GM12878 (cell line): ENCODE measurements at regions of chr1 and their contacts with region 1.

Region 1: GRCh38 chr1:150162862-150163706 is 13.4 kb downstream of the PLEKHO1 start:
- DNase-seq: peak; percentile 97
- ATAC-seq: peak; percentile 66
- H3K4me3 ChIP-seq: peak overlapping the region; percentile 56
- H3K27ac ChIP-seq: peak overlapping the region; percentile 100
- H3K4me1 ChIP-seq: peaks cover 80% of the 10 kb centered on the region
- H3K27me3 ChIP-seq: no peaks in the 10 kb centered on the region
- CTCF ChIP-seq: no peak
- EP300 ChIP-seq: peak in 1 of 2 experiments; percentile 17; a peak in 1 of 4 replicates
- POLR2A ChIP-seq: peak; percentile 84
- RAD21 ChIP-seq: no peak

Region 2: GRCh38 chr1:149886396-149887195 is 276.5 kb before region 1 on chr1:
- CTCF ChIA-PET with region 1: interaction called, 13 read pairs
- POLR2A ChIA-PET with region 1: interaction called, 25 read pairs
- RAD21 ChIA-PET with region 1: interaction called, 5 read pairs
- SMC1A ChIA-PET with region 1: interaction called, 10 read pairs
- in situ Hi-C with region 1: no loop called
- intact Hi-C with region 1: loop called (anchors 1 kb)
- DNase-seq: peak; percentile 99
- ATAC-seq: peak; percentile 73
- H3K4me3 ChIP-seq: peak overlapping the region; percentile 65
- H3K27ac ChIP-seq: peak overlapping the region; percentile 93
- H3K4me1 ChIP-seq: no peaks in the 10 kb centered on the region
- H3K27me3 ChIP-seq: no peaks in the 10 kb centered on the region
- CTCF ChIP-seq: no peak
- EP300 ChIP-seq: no peak
- POLR2A ChIP-seq: peak; percentile 70
- RAD21 ChIP-seq: no peak

Region 3: DNA sequence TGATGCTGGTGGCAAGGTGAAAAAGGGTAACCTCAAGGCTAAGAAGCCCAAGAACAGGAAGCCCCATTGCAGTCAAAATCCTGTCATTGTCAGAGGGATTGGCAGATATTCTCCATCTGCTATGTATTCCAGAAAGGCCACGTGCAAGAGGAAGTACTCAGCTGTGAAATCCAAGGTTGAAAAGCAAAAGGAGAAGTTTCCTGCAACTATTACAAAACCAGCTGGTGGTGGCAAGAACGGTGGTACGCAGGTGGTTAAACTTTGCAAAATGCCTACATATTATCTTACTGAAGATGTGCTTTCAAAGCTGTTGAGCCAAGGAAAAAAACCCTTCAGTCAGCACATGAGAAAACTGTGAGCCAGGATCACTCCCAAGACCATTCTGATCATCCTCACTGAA is 109.2 kb before region 1 on chr1:
- CTCF ChIA-PET with region 1: interaction called, 16 read pairs
- POLR2A ChIA-PET with region 1: interaction called, 6 read pairs
- RAD21 ChIA-PET with region 1: interaction called, 6 read pairs
- SMC1A ChIA-PET with region 1: interaction called, 7 read pairs
- in situ Hi-C with region 1: no loop called
- intact Hi-C with region 1: no loop called
- DNase-seq: no peak
- ATAC-seq: no peak
- H3K4me3 ChIP-seq: no peak overlapping the region
- H3K27ac ChIP-seq: no peak overlapping the region
- H3K4me1 ChIP-seq: peaks cover 4% of the 10 kb centered on the region
- H3K27me3 ChIP-seq: no peaks in the 10 kb centered on the region
- CTCF ChIP-seq: no peak
- EP300 ChIP-seq: no peak
- POLR2A ChIP-seq: no peak
- RAD21 ChIP-seq: no peak

Region 4: GRCh38 chr1:150067184-150068036 is 95.7 kb before region 1 on chr1 and contains the start of gene VPS45:
- CTCF ChIA-PET with region 1: interaction called, 577 read pairs
- POLR2A ChIA-PET with region 1: interaction called, 21 read pairs
- RAD21 ChIA-PET with region 1: interaction called, 287 read pairs
- SMC1A ChIA-PET with region 1: interaction called, 338 read pairs
- in situ Hi-C with region 1: loop called (anchors 5 kb)
- intact Hi-C with region 1: loop called (anchors 2 kb)
- DNase-seq: peak; percentile 71
- ATAC-seq: peak; percentile 98
- H3K4me3 ChIP-seq: peak within 1 kb of the TSS; percentile 84
- H3K27ac ChIP-seq: peak within 1 kb of the TSS; percentile 97
- H3K4me1 ChIP-seq: peaks cover 9% of the 10 kb centered on the region; the same call in 1 of the 2 replicates
- H3K27me3 ChIP-seq: no peaks in the 10 kb centered on the region
- CTCF ChIP-seq: peak; percentile 34 to 44 (median 38); a peak in 4 of 6 replicates
- EP300 ChIP-seq: peak; percentile 13 to 36; a peak in 2 of 4 replicates
- POLR2A ChIP-seq: peak; percentile 86
- RAD21 ChIP-seq: 0 out of 2 replicates have a peak, but pooled peaks have one; percentile 18
- polyA plus RNA-seq, gene VPS45: 24.4 to 28.7 TPM

Region 5: DNA sequence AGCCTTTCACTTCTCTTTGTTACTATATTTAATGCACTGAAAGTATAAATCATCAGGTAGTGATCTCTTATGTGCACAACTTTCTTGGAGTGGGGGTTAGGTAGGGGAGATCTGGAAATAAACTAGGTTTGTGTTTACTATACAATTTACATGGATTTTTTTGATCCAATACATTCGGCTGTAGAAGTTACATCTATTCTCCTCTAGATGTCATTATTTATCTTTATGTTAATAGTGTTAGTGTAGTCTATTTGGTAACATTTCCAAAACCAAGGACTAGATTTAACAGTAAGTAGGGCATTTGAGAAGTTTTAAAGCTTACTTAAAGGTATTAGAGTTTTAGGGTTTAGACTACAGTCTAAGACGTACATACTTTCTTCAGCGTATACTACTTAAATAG is 90.1 kb before region 1 on chr1:
- CTCF ChIA-PET with region 1: interaction called, 577 read pairs
- POLR2A ChIA-PET with region 1: interaction called, 21 read pairs
- RAD21 ChIA-PET with region 1: interaction called, 287 read pairs
- SMC1A ChIA-PET with region 1: interaction called, 338 read pairs
- in situ Hi-C with region 1: loop called (anchors 5 kb)
- intact Hi-C with region 1: no loop called
- DNase-seq: no peak
- ATAC-seq: peak; percentile 85
- H3K4me3 ChIP-seq: no peak overlapping the region
- H3K27ac ChIP-seq: no peak overlapping the region
- H3K4me1 ChIP-seq: no peaks in the 10 kb centered on the region
- H3K27me3 ChIP-seq: no peaks in the 10 kb centered on the region
- CTCF ChIP-seq: peak in 2 of 3 experiments; percentile 27 to 42; a peak in 2 of 6 replicates
- EP300 ChIP-seq: no peak
- POLR2A ChIP-seq: no peak
- RAD21 ChIP-seq: peak; percentile 42; the same call in 1 of the 2 replicates

Region 6: GRCh38 chr1:150149271-150150132 is 13.6 kb before region 1 on chr1 and contains the start of gene PLEKHO1:
- CTCF ChIA-PET with region 1: interaction called, 78 read pairs
- POLR2A ChIA-PET with region 1: interaction called, 120 read pairs
- RAD21 ChIA-PET with region 1: interaction called, 65 read pairs
- SMC1A ChIA-PET with region 1: interaction called, 73 read pairs
- in situ Hi-C with region 1: no loop called
- intact Hi-C with region 1: loop called (anchors 1 kb)
- DNase-seq: no peak
- ATAC-seq: peak; percentile 68
- H3K4me3 ChIP-seq: peak within 1 kb of the TSS; percentile 100
- H3K27ac ChIP-seq: peak within 1 kb of the TSS; percentile 99
- H3K4me1 ChIP-seq: peaks cover 20% of the 10 kb centered on the region
- H3K27me3 ChIP-seq: no peaks in the 10 kb centered on the region
- CTCF ChIP-seq: no peak
- EP300 ChIP-seq: no peak
- POLR2A ChIP-seq: peak; percentile 79
- RAD21 ChIP-seq: no peak
- polyA plus RNA-seq, gene PLEKHO1: 5.3 to 12.9 TPM

Region 7: DNA sequence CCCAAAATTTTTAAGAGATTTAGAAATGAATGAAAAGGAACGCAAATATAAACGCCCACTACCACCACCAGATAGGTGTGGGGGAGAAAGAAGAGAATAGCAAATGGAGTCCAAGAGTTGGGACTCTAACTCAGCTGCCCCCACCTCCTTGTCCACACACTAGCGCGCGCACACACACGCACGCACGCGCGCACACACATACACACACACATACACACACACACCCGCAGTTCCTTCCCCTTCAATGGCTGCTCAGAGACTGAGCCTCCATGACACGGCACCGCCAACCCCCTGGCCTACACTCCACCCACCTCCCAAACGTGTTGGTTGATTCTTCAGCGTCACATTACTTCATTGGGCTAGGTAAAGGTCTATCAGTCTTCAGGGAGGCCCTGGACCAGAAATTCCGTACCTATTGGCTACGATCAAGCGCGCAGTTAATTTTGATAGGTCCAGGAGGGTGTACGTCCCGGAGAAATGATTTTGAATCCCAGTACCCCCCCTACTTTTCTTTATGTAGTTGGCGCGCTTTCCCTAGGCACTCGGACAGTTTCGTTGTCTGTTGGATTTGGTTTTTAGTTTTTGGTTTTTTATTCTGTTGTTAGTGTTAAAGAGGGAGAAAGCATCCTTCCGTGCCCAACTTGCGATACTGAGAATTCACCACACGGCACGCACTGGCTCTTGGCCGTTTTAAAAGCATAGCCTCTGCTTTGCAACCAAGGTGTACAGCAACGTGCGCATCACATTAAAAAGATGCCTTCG is 72.9 kb after region 1 on chr1 and contains the start of gene ANP32E:
- CTCF ChIA-PET with region 1: interaction called, 7 read pairs
- POLR2A ChIA-PET with region 1: interaction called, 11 read pairs
- RAD21 ChIA-PET with region 1: interaction called, 6 read pairs
- SMC1A ChIA-PET with region 1: interaction called, 3 read pairs
- in situ Hi-C with region 1: no loop called
- intact Hi-C with region 1: no loop called
- DNase-seq: peak; percentile 99
- ATAC-seq: peak; percentile 87
- H3K4me3 ChIP-seq: peak within 1 kb of the TSS; percentile 87
- H3K27ac ChIP-seq: peak within 1 kb of the TSS; percentile 99
- H3K4me1 ChIP-seq: no peaks in the 10 kb centered on the region
- H3K27me3 ChIP-seq: no peaks in the 10 kb centered on the region
- CTCF ChIP-seq: no peak; a peak in 2 of 6 replicates
- EP300 ChIP-seq: 0 out of 4 replicates have a peak, but pooled peaks of 1 of the 2 experiments have one; percentile 24
- POLR2A ChIP-seq: peak; percentile 98
- RAD21 ChIP-seq: no peak
- polyA plus RNA-seq, gene ANP32E: 142 to 250 TPM

Region 8: DNA sequence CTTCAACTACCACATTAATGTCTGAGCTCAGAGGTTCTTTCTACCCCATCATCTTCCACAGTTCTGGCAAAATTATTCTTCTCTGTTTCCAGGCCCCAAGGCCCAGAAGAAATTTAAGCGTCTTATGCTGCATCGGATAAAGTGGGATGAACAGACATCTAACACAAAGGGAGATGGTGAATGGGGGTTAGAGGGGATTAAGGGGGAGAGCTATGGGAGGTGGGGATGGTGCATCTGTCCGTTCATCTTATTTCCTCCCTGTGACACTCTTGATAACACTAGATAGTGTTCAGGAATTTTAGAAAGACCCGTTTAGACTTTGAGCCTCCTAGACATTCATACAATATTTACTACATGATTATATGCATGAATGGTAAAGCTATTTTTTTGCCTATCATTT is 183.2 kb after region 1 on chr1:
- CTCF ChIA-PET with region 1: no interaction called
- POLR2A ChIA-PET with region 1: no interaction called
- RAD21 ChIA-PET with region 1: no interaction called
- SMC1A ChIA-PET with region 1: no interaction called
- in situ Hi-C with region 1: no loop called
- intact Hi-C with region 1: no loop called
- DNase-seq: no peak
- ATAC-seq: no peak
- H3K4me3 ChIP-seq: no peak overlapping the region
- H3K27ac ChIP-seq: no peak overlapping the region
- H3K4me1 ChIP-seq: no peaks in the 10 kb centered on the region
- H3K27me3 ChIP-seq: no peaks in the 10 kb centered on the region
- CTCF ChIP-seq: no peak
- EP300 ChIP-seq: no peak
- POLR2A ChIP-seq: no peak
- RAD21 ChIP-seq: no peak

Region 9: DNA sequence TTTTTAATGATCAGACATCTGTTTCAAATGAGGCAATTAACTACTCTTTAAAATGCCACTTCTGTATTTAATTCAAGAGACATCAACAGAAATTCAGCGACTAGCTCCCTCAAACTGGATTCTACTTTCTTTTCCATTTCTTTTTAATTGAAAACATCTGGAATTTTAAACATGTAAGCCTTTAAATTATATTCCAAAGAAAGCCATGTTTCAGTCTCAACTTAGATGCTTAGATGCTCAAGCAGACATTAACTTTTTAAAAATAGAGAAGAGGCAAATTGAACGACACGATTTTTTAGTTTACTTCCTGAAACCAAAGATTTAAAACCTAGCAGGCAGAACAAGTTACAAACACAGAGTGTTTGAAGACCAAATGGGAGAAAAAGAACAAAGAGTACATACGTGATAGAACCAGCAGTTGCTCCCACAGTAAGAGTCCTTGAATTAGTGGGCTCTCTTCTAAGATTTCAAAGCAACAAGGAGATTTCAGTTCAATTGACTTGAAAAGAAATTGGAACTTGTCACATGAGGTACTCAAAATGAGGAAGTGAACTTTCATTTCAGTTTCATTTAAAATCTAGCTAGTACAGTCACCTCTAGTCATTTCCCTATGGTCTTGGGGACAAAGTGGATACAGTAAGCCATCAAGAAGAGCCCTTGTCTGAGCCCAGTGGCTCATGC is 602.4 kb after region 1 on chr1 and contains the start of gene CTSS:
- CTCF ChIA-PET with region 1: no interaction called
- POLR2A ChIA-PET with region 1: no interaction called
- RAD21 ChIA-PET with region 1: no interaction called
- SMC1A ChIA-PET with region 1: no interaction called
- in situ Hi-C with region 1: no loop called
- intact Hi-C with region 1: no loop called
- DNase-seq: peak; percentile 88
- ATAC-seq: peak; percentile 90
- H3K4me3 ChIP-seq: peak within 1 kb of the TSS; percentile 77
- H3K27ac ChIP-seq: peak within 1 kb of the TSS; percentile 96
- H3K4me1 ChIP-seq: peaks cover 9% of the 10 kb centered on the region
- H3K27me3 ChIP-seq: no peaks in the 10 kb centered on the region
- CTCF ChIP-seq: no peak
- EP300 ChIP-seq: no peak; a peak in 1 of 4 replicates
- POLR2A ChIP-seq: no peak
- RAD21 ChIP-seq: no peak
- polyA plus RNA-seq, gene CTSS: 68.6 to 84.8 TPM